ENCODE measurements at regions of chr14 and their contacts with region 1.

Region 1: GRCh38 chr14:49585803-49586672 is at the start of gene RPS29:
- DNase-seq: peak; percentile 94
- ATAC-seq: peak; percentile 82
- H3K4me3 Mint-ChIP-seq: peak within 1 kb of the TSS; percentile 98
- H3K27ac Mint-ChIP-seq: peak within 1 kb of the TSS; percentile 99
- H3K4me1 Mint-ChIP-seq: peaks cover 53% of the 10 kb centered on the region
- H3K27me3 Mint-ChIP-seq: no peaks in the 10 kb centered on the region
- CTCF ChIP-seq: no peak
- total RNA-seq, gene RPS29: 3,259 and 3,732 TPM in 2 replicates

Region 2: GRCh38 chr14:49526101-49526500 is 59.9 kb before region 1 on chr14:
- CTCF ChIA-PET with region 1: no interaction called
- POLR2A ChIA-PET with region 1: no interaction called
- intact Hi-C with region 1: no loop called
- DNase-seq: no peak
- ATAC-seq: no peak
- H3K4me3 Mint-ChIP-seq: no peak overlapping the region
- H3K27ac Mint-ChIP-seq: no peak overlapping the region
- H3K4me1 Mint-ChIP-seq: no peaks in the 10 kb centered on the region
- H3K27me3 Mint-ChIP-seq: peaks cover 33% of the 10 kb centered on the region
- CTCF ChIP-seq: no peak

Region 3: DNA sequence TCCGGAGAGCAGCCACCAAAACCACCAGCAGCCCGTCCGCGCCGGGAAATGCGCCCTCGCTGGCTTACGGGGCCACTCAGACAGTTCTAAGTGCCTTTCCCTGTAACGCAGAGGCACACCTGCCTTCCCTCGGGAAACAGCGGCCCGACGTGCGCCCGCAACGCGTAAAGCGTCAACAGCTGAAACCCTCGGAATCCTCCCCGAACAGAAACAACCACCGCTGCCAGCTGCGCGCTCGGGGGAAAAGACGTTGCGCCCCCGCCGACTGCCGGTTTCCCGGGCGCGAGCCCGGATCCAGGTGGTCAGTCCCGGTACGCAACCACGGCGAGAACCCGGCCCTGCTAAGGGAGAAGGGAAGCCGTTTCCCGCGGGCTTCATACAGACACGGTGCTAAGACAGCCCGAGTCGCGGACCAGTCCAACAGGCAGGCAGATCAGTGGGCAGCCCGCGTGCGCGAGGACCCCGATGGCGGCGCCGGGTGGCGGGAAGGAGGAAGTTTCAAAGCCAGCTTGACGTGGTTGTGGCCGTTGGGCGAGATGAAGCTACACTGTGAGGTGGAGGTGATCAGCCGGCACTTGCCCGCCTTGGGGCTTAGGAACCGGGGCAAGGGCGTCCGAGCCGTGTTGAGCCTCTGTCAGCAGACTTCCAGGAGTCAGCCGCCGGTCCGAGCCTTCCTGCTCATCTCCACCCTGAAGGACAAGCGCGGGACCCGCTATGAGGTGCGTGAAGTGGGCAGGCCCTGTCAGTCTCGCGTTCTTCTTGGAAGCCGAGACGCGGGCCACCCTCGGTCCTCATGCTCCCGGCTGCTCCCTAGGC is 12.7 kb after region 1 on chr14 and contains the start of gene LRR1:
- CTCF ChIA-PET with region 1: interaction called, 32 read pairs
- POLR2A ChIA-PET with region 1: interaction called, 209 read pairs
- intact Hi-C with region 1: loop called (anchors 1 kb)
- DNase-seq: peak; percentile 94
- ATAC-seq: peak; percentile 67
- H3K4me3 Mint-ChIP-seq: peak within 1 kb of the TSS; percentile 95
- H3K27ac Mint-ChIP-seq: peak within 1 kb of the TSS; percentile 96
- H3K4me1 Mint-ChIP-seq: peaks cover 60% of the 10 kb centered on the region
- H3K27me3 Mint-ChIP-seq: no peaks in the 10 kb centered on the region
- CTCF ChIP-seq: no peak
- total RNA-seq, gene LRR1: 15.1 and 19.9 TPM in 2 replicates

Region 4: GRCh38 chr14:49692811-49693734 is 107.0 kb after region 1 on chr14 and contains the start of gene KLHDC1:
- CTCF ChIA-PET with region 1: interaction called, 4 read pairs
- POLR2A ChIA-PET with region 1: interaction called, 6 read pairs
- intact Hi-C with region 1: loop called (anchors 2 kb)
- DNase-seq: peak; percentile 74
- ATAC-seq: peak; percentile 80
- H3K4me3 Mint-ChIP-seq: peak within 1 kb of the TSS; percentile 83
- H3K27ac Mint-ChIP-seq: peak within 1 kb of the TSS; percentile 84
- H3K4me1 Mint-ChIP-seq: peaks cover 24% of the 10 kb centered on the region
- H3K27me3 Mint-ChIP-seq: no peaks in the 10 kb centered on the region
- CTCF ChIP-seq: no peak
- total RNA-seq, gene KLHDC1: 5.7 and 6.9 TPM in 2 replicates

Region 5: DNA sequence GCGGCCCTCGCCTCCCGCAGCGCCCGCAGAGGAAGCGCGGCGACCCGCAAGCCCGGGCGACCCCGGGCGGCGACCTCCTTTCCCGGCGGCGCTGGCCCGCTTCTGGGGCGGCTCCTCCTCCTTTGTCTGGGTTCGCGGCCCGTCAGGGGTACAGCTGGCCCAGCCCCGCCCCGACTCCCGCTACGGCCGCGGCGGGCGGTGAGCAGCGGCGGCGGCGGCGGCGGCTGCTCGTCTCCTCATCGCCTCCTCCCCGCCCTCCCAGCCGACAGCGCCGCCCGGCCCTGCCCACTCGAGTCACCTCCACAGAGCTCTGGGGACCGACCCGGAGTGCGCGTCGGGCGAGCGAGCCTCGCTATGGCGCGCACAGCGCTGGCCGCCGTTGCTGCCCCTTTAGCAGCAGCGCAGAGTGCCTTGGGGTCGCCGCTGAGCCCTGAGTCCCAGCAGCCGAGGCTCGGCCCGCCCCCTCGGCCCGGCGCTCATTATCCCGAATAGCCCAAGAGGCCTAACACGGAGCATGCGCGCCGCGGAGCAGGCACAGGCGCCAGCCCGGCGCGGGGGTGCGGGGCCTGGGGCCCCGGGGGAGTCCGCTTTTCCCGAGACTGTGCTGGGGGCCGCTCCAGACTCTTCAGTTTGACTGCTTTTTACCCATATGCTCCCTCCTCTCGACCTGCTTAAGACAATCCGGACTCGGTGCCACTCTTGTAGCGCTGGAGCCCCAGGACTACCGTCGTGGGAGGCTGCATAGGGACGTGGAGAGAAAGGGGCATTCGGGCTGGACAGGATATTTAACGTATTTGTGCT is 645.6 kb after region 1 on chr14 and contains the start of gene SOS2:
- CTCF ChIA-PET with region 1: no interaction called
- POLR2A ChIA-PET with region 1: no interaction called
- intact Hi-C with region 1: loop called (anchors 1 kb)
- DNase-seq: peak; percentile 87
- ATAC-seq: peak; percentile 87
- H3K4me3 Mint-ChIP-seq: peak within 1 kb of the TSS; percentile 93
- H3K27ac Mint-ChIP-seq: peak within 1 kb of the TSS; percentile 92
- H3K4me1 Mint-ChIP-seq: peaks cover 35% of the 10 kb centered on the region
- H3K27me3 Mint-ChIP-seq: no peaks in the 10 kb centered on the region
- CTCF ChIP-seq: no peak
- total RNA-seq, gene SOS2: 29.1 and 32.0 TPM in 2 replicates

Region 6: GRCh38 chr14:50943943-50944646 is 1358.1 kb after region 1 on chr14 and contains the start of gene PYGL:
- CTCF ChIA-PET with region 1: no interaction called
- POLR2A ChIA-PET with region 1: no interaction called
- intact Hi-C with region 1: no loop called
- DNase-seq: peak; percentile 39
- ATAC-seq: peak; percentile 87
- H3K4me3 Mint-ChIP-seq: peak within 1 kb of the TSS; percentile 86
- H3K27ac Mint-ChIP-seq: no peak within 1 kb of the TSS
- H3K4me1 Mint-ChIP-seq: peaks cover 15% of the 10 kb centered on the region
- H3K27me3 Mint-ChIP-seq: peaks cover 37% of the 10 kb centered on the region
- CTCF ChIP-seq: no peak
- total RNA-seq, gene PYGL: 0.32 TPM in 1 of 2 replicates, not detected in the other